Activated naive CD4-positive, alpha-beta T cell treated with anti-CD3 and anti-CD28 coated beads, Interleukin-2, amount 10 ng/mL, durations not matched to agents 7 days and 5 days (primary cell): ENCODE measurements at regions of chr16 and their contacts with region 1.

Region 1: DNA sequence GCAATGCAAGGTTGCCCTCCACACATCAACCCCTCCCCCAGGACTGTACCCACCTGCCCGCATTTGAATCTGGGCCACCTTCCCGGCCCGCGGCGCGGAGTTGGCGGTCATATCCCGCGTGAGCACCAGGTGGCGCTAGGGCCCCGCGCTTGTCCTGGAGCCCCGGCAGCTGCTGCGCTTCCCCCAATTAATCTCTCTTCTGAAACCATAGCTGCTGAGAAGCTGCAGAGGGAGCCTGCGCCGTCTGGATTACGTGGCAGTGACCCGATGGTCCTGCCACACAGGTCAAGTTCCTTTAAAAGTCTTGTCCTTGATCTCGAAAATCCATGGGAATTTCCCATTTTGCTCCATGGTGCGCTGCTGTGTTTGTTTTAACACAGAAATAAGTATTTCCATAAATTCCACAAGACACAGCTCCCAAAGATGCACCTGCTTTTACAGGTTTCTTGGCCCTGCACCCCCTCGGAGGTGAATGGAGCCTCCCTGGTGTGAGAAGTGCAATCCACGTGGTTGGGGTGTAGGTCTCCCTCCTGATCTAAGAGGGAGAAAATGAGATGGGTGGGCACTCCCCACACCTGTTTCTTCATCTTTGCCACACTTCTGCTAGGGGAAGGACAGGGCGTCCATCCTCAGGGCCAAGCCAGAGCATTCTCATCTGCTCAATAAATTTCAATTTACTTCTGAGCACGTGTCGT is 22.1 kb downstream of the COX4I1 start:
- DNase-seq: peak; percentile 79
- H3K4me3 Mint-ChIP-seq: no peak overlapping the region
- H3K27ac Mint-ChIP-seq: no peak overlapping the region
- H3K4me1 Mint-ChIP-seq: peaks cover 4% of the 10 kb centered on the region
- H3K27me3 Mint-ChIP-seq: peaks cover 34% of the 10 kb centered on the region

Region 2: GRCh38 chr16:85878874-85879273 is 57.3 kb after region 1 on chr16:
- CTCF ChIA-PET with region 1: no interaction called
- DNase-seq: no peak
- H3K4me3 Mint-ChIP-seq: no peak overlapping the region
- H3K27ac Mint-ChIP-seq: no peak overlapping the region
- H3K4me1 Mint-ChIP-seq: no peaks in the 10 kb centered on the region
- H3K27me3 Mint-ChIP-seq: peaks cover 39% of the 10 kb centered on the region

Region 3: DNA sequence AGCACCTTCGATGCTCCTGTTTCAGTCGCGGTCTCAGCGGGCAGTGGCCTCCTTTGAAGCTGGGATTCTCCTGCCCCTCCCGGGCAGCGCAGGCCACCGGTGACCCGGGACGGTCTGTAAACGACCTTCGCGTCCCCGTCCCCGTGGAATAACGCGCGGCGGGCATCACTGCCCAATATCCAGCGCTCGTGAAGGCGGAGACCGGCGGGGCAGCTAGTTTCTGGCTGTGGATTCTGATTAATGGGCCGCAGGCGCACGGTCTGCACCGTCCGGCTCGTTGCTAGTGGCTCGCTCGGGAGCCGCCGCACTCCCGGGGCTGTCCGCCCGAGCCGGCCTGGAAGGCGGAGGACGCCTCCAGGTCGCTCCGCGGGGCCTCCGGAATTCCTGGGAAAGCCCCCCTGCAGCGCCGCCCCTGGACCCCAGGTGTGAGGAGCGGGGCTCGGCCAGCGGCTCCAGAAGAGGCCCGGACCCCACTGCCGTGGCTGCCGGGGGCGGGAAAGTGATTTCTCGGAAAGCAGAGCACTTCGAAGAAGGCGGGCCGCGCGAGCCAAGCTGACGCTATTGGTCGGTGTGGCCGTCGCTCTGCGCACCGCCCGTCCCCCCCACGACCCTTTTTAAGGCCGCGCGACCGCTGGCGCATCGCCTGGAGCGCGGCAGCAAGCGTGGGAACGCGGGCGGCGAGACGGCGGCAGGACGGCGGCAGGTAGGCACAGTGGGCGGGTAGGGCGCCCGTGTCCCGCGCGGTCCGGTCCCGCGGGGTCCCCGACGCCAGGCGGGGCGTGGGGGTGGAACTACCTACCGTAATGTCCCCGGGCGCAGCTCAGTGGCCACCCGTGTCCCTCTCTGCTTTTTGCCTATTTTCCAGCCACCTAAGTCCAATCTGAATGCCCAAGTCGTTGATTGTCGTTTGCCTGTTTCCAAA is 77.2 kb after region 1 on chr16 and contains the start of gene IRF8:
- CTCF ChIA-PET with region 1: interaction called, 21 read pairs
- DNase-seq: peak; percentile 85
- H3K4me3 Mint-ChIP-seq: peak within 1 kb of the TSS; percentile 86
- H3K27ac Mint-ChIP-seq: peak within 1 kb of the TSS; percentile 75
- H3K4me1 Mint-ChIP-seq: peaks cover 58% of the 10 kb centered on the region
- H3K27me3 Mint-ChIP-seq: peaks cover 30% of the 10 kb centered on the region

Region 4: GRCh38 chr16:85986931-85987749 is 165.6 kb after region 1 on chr16:
- CTCF ChIA-PET with region 1: interaction called, 234 read pairs
- DNase-seq: peak; percentile 43
- H3K4me3 Mint-ChIP-seq: no peak overlapping the region
- H3K27ac Mint-ChIP-seq: no peak overlapping the region
- H3K4me1 Mint-ChIP-seq: peaks cover 47% of the 10 kb centered on the region
- H3K27me3 Mint-ChIP-seq: peaks cover 16% of the 10 kb centered on the region

Region 5: GRCh38 chr16:85995541-85996423 is 174.2 kb after region 1 on chr16:
- CTCF ChIA-PET with region 1: interaction called, 234 read pairs
- DNase-seq: peak; percentile 30
- H3K4me3 Mint-ChIP-seq: no peak overlapping the region
- H3K27ac Mint-ChIP-seq: no peak overlapping the region
- H3K4me1 Mint-ChIP-seq: peaks cover 24% of the 10 kb centered on the region
- H3K27me3 Mint-ChIP-seq: no peaks in the 10 kb centered on the region

Region 6: DNA sequence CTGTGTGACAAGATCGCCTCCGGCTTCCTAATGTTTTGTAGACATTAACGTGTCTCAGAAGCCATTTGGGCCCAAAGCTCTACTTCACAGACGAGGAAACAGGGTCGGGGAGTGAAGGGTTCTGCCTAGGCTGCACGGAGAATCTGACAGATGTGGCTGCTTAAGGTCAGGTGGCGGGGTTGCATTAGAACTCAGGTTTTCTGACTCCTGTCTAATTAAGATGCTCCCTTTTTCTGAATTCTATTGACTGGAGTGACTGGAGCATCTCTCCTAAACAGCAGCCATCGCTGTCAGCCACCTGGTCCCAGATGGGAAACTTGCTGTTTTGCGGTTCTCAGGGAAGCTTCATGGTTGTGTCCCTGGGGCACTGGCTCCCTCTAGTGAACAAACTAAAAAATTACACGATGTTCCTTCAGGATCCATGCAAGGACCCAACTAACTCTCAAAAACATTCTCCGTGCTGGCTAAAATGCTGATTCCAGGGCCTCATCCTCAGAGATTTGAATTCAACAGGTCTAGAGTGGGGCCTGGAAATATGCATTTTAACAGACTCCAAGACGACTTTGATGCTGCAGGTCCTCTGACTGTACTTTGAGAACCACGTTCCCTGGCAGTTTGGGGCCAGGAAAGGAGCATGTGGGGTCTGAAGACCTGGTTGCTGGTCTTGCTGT is 194.7 kb after region 1 on chr16:
- CTCF ChIA-PET with region 1: interaction called, 139 read pairs
- DNase-seq: peak; percentile 43
- H3K4me3 Mint-ChIP-seq: no peak overlapping the region
- H3K27ac Mint-ChIP-seq: no peak overlapping the region
- H3K4me1 Mint-ChIP-seq: no peaks in the 10 kb centered on the region
- H3K27me3 Mint-ChIP-seq: peaks cover 37% of the 10 kb centered on the region

Region 7: DNA sequence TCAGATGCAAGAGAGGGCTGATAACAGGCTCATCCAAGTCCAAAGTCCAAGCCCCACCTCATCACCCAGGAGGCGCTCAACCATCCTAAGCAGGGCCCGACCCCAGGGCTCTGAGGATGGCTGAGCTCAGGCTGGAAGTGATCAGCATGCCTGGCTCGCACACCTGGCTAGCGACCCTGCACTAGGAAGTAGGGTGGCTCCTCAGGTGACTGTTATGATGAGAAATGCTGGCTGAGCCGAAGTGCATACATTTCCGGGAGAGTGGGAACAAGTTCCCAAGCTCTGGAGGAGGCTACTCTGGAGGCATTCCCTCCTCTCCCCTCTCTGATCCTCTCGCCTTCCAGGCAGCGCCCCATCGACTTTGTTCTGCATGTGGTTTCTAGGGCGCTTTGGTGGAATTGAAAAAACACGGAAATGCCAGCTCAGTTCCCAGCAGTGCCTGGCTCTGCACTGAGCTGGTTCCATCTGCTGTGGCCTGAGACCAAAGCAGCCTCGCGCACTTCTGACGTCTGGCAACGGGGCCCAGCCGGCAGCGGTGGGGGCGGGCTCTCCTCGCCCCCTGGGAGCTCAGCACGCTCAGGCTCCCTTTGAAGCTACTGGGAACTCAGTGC is 207.6 kb after region 1 on chr16:
- CTCF ChIA-PET with region 1: interaction called, 139 read pairs
- DNase-seq: no peak
- H3K4me3 Mint-ChIP-seq: no peak overlapping the region
- H3K27ac Mint-ChIP-seq: no peak overlapping the region
- H3K4me1 Mint-ChIP-seq: no peaks in the 10 kb centered on the region
- H3K27me3 Mint-ChIP-seq: peaks cover 57% of the 10 kb centered on the region